ENCODE measurements at regions of chr17 and their contacts with region 1.

Region 1: DNA sequence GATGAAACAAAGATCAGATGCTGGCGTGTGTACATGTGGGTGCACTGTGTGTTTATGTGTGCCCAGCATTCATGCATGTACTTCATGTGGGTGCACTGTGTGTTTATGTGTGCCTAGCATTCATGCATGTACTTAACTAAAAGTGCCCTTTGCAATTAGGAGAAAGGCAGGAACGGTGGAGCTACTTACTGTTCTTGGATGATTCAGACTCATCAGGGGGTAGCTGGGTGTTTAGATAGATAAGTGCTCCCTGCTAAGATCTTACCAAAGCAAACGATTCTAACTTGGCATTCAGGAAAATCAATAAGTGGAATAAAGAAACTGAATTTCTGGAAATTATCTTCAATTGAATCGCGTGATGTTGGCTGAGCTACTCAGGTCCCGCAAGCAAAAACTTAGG is 8.6 kb upstream of the MYH2 start:
- DNase-seq: no peak

Region 2: DNA sequence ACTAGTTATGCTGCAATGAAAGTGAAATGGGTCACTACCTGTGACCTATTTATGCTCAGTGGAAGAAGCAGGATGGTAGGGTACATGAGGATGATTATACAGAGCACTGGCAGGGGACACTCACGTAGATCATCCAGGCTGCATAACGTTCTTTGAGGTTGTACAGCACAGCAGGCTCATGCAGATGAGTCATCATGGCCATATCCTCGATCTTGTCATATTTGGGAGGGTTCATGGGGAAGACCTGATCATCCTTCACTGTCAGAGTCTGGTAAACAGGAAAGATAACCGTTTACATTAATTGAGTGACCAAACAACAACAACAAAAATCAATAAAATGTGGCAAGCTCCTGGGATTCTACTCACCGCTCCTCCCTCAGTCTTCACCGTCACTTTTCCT is 10.7 kb before region 1 on chr17:
- intact Hi-C with region 1: loop called in 1 of 2 experiments (anchors 1 kb)
- DNase-seq: no peak